HepG2 (cell line): ENCODE measurements at regions of chr2 and their contacts with region 1.

Region 1: GRCh38 chr2:126776692-126777619 is 121.0 kb downstream of the GYPC start:
- DNase-seq: peak; percentile 40
- ATAC-seq: peak; percentile 91
- H3K4me3 ChIP-seq: peak overlapping the region; percentile 33 to 71 (median 42); a peak in 5 of 6 replicates
- H3K27ac ChIP-seq: no peak overlapping the region
- H3K4me1 ChIP-seq: peaks cover 8% of the 10 kb centered on the region
- H3K27me3 ChIP-seq: peaks cover 8 to 63% of the 10 kb centered on the region in 2 experiments; a peak in 4 of 5 replicates
- CTCF ChIP-seq: peak; percentile 98
- EP300 ChIP-seq: no peak
- POLR2A ChIP-seq: no peak
- RAD21 ChIP-seq: peak; percentile 95

Region 2: GRCh38 chr2:124804014-124804940 is 1972.7 kb before region 1 on chr2:
- CTCF ChIA-PET with region 1: no interaction called
- POLR2A ChIA-PET with region 1: no interaction called
- in situ Hi-C with region 1: loop called (anchors 25 kb)
- intact Hi-C with region 1: no loop called
- DNase-seq: peak; percentile 69
- ATAC-seq: peak; percentile 94
- H3K4me3 ChIP-seq: no peak overlapping the region
- H3K27ac ChIP-seq: no peak overlapping the region
- H3K4me1 ChIP-seq: no peaks in the 10 kb centered on the region
- H3K27me3 ChIP-seq: no peaks in the 10 kb centered on the region
- CTCF ChIP-seq: peak; percentile 83
- EP300 ChIP-seq: no peak
- POLR2A ChIP-seq: no peak
- RAD21 ChIP-seq: no peak

Region 3: GRCh38 chr2:126244937-126245336 is 532.0 kb before region 1 on chr2:
- CTCF ChIA-PET with region 1: interaction called, 8 read pairs
- POLR2A ChIA-PET with region 1: no interaction called
- in situ Hi-C with region 1: loop called (anchors 5 kb)
- intact Hi-C with region 1: no loop called
- DNase-seq: peak; percentile 61
- ATAC-seq: peak; percentile 96
- H3K4me3 ChIP-seq: no peak overlapping the region
- H3K27ac ChIP-seq: no peak overlapping the region
- H3K4me1 ChIP-seq: no peaks in the 10 kb centered on the region
- H3K27me3 ChIP-seq: no peaks in the 10 kb centered on the region
- CTCF ChIP-seq: peak; percentile 75
- EP300 ChIP-seq: no peak
- POLR2A ChIP-seq: no peak
- RAD21 ChIP-seq: peak; percentile 68

Region 4: DNA sequence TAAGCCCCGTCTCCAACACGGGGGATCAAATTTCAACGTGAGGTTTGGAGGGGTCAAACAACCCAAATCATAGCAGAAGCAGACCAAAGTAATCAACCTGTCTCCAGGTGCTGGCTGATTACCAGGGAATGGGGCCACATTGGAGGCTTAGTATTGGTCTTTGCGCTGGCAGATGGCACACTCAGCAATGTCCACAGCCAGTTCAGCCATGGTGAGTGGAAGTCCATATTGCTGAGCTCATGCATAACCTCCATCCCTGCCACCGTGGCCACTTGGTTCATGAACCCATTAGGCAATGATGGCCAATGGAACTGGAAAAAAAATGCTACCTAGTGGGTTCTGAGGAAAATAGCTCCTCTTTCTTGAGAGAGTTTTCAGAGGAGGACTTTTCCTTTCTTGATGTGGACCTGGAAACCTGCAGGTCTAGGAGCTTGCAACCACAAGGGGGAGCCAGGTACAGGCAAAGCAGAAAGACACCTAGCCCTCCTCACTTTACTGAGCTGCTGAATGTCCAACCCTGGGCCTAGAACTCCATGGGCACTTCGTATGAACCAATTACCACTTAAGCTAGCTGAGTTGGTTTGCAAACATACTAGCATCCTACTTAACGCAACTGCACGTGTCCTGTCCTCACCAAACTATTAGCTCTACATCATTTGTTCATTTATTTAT is 249.0 kb before region 1 on chr2:
- CTCF ChIA-PET with region 1: interaction called, 21 read pairs
- POLR2A ChIA-PET with region 1: no interaction called
- in situ Hi-C with region 1: loop called (anchors 5 kb)
- intact Hi-C with region 1: no loop called
- DNase-seq: peak; percentile 50
- ATAC-seq: peak; percentile 96
- H3K4me3 ChIP-seq: no peak overlapping the region
- H3K27ac ChIP-seq: no peak overlapping the region
- H3K4me1 ChIP-seq: no peaks in the 10 kb centered on the region
- H3K27me3 ChIP-seq: no peaks in the 10 kb centered on the region
- CTCF ChIP-seq: peak; percentile 61
- EP300 ChIP-seq: no peak
- POLR2A ChIP-seq: no peak
- RAD21 ChIP-seq: peak; percentile 74